Left cardiac atrium (tissue), 4 donors: ENCODE measurements at regions of chr17 and their contacts with region 1.

Region 1: GRCh38 chr17:66322764-66323163 is 20.4 kb downstream of the PRKCA start:
- DNase-seq: no peak
- ATAC-seq: no peak

Region 2: GRCh38 chr17:66373944-66374817 is 51.4 kb after region 1 on chr17:
- intact Hi-C with region 1: loop called in 1 of 2 experiments (anchors 10 kb)
- DNase-seq: peak; percentile 27
- ATAC-seq: peak; percentile 78 to 86

Region 3: GRCh38 chr17:66633317-66633965 is 310.7 kb after region 1 on chr17:
- intact Hi-C with region 1: no loop called
- DNase-seq: no peak
- ATAC-seq: no peak